Activated naive CD4-positive, alpha-beta T cell treated with anti-CD3 and anti-CD28 coated beads for 36 hours (primary cell): ENCODE measurements at regions of chr6 and their contacts with region 1.

Region 1: DNA sequence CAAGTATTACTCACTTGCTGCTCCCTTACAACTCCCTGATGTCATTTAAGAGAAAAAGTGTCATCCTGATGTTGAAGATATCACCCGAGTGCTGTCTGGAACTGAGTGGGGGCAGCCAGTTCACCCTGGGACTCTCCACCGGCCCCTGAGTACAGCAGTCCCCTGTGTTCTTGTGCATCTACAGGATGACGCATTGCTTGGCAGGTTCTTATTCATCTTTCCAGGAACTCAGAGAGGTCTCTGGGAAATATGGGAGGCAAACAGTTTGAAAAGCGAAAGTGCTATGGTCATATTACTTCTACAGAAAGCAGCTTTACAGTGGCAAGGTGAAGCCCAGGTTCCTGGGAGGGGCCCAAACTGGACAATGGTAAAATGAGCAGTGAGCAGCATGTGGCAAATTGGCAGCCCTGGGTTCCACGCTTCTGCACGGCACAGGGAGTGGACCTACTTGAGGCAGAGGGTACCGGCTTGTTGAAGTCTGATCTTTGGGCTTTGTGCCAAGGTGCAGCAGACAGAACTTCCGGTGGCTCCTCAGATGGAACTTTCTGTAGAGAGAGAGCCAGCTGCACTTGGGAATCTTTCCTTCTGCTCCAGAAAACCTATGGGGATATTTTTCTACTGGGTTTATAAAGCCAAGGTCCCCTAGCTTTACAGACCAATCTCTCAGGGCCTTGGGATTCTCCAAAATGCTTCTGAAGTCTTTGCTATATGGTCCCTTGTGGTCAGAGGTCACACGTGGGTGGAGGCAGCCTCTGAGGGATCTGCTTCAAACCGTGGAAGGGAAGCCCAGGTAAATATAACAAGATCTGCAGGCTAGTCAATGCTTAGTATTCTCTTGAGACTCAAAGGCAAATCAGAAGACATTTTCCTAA is 128.3 kb downstream of the MAP3K7 start:
- DNase-seq: peak; percentile 95
- H3K4me3 Mint-ChIP-seq: peak overlapping the region; percentile 66
- H3K27ac Mint-ChIP-seq: peak overlapping the region; percentile 99
- H3K4me1 Mint-ChIP-seq: peaks cover 89% of the 10 kb centered on the region
- H3K27me3 Mint-ChIP-seq: no peaks in the 10 kb centered on the region

Region 2: DNA sequence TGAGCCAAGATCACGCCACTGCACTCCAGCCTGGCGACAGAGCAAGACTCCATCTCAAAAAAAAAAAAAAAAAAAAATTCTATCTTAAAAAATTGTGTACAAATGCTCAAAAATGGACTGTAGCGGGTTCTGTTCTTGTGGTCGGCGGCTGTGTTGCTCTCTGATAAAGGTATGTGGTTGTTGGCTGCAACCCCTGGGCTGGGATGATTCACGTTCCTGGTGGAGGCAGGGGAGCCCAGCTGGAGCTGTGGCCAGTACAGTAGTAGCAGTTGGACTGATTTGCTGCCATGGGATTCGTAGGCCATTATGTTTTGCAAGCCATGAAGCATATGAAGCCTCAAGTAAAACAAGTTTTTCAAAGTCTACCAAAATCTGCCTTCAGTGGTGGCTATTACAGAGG is 661.3 kb before region 1 on chr6:
- CTCF ChIA-PET with region 1: no interaction called
- intact Hi-C with region 1: no loop called
- DNase-seq: no peak
- H3K4me3 Mint-ChIP-seq: no peak overlapping the region
- H3K27ac Mint-ChIP-seq: no peak overlapping the region
- H3K4me1 Mint-ChIP-seq: peaks cover 27% of the 10 kb centered on the region
- H3K27me3 Mint-ChIP-seq: no peaks in the 10 kb centered on the region

Region 3: GRCh38 chr6:90296346-90297114 is 162.1 kb before region 1 on chr6 and contains the start of gene BACH2:
- CTCF ChIA-PET with region 1: interaction called, 3 read pairs
- intact Hi-C with region 1: loop called (anchors 1 kb)
- DNase-seq: peak; percentile 99
- H3K4me3 Mint-ChIP-seq: peak within 1 kb of the TSS; percentile 86
- H3K27ac Mint-ChIP-seq: peak within 1 kb of the TSS; percentile 97
- H3K4me1 Mint-ChIP-seq: peaks cover 41% of the 10 kb centered on the region
- H3K27me3 Mint-ChIP-seq: peaks cover 2% of the 10 kb centered on the region
- total RNA-seq, gene BACH2: 75.1 to 77.9 TPM

Region 4: GRCh38 chr6:90326404-90327057 is 132.1 kb before region 1 on chr6:
- CTCF ChIA-PET with region 1: no interaction called
- intact Hi-C with region 1: loop called (anchors 1 kb)
- DNase-seq: peak; percentile 55
- H3K4me3 Mint-ChIP-seq: no peak overlapping the region
- H3K27ac Mint-ChIP-seq: peak overlapping the region; percentile 63
- H3K4me1 Mint-ChIP-seq: peaks cover 52% of the 10 kb centered on the region
- H3K27me3 Mint-ChIP-seq: no peaks in the 10 kb centered on the region

Region 5: GRCh38 chr6:90403489-90404381 is 54.9 kb before region 1 on chr6:
- CTCF ChIA-PET with region 1: interaction called, 30 read pairs
- intact Hi-C with region 1: loop called (anchors 1 kb)
- DNase-seq: no peak
- H3K4me3 Mint-ChIP-seq: peak overlapping the region; percentile 57
- H3K27ac Mint-ChIP-seq: peak overlapping the region; percentile 87
- H3K4me1 Mint-ChIP-seq: peaks cover 86% of the 10 kb centered on the region
- H3K27me3 Mint-ChIP-seq: no peaks in the 10 kb centered on the region

Region 6: GRCh38 chr6:90425161-90425641 is 33.4 kb before region 1 on chr6:
- CTCF ChIA-PET with region 1: interaction called, 8 read pairs
- intact Hi-C with region 1: loop called (anchors 1 kb)
- DNase-seq: peak; percentile 46
- H3K4me3 Mint-ChIP-seq: peak overlapping the region; percentile 48
- H3K27ac Mint-ChIP-seq: peak overlapping the region; percentile 92
- H3K4me1 Mint-ChIP-seq: peaks cover 41% of the 10 kb centered on the region
- H3K27me3 Mint-ChIP-seq: no peaks in the 10 kb centered on the region

Region 7: GRCh38 chr6:90472744-90473143 is 14.2 kb after region 1 on chr6:
- CTCF ChIA-PET with region 1: interaction called, 40 read pairs
- intact Hi-C with region 1: loop called (anchors 1 kb)
- DNase-seq: peak; percentile 61
- H3K4me3 Mint-ChIP-seq: peak overlapping the region; percentile 48
- H3K27ac Mint-ChIP-seq: peak overlapping the region; percentile 92
- H3K4me1 Mint-ChIP-seq: peaks cover 86% of the 10 kb centered on the region
- H3K27me3 Mint-ChIP-seq: no peaks in the 10 kb centered on the region